PC-3 (cell line): ENCODE measurements at regions of chr1 and their contacts with region 1.

Region 1: GRCh38 chr1:93447516-93448291 is at the start of gene FNBP1L:
- DNase-seq: peak; percentile 83
- ATAC-seq: peak; percentile 77
- H3K4me3 ChIP-seq: peak within 1 kb of the TSS; percentile 85
- H3K27ac ChIP-seq: peak within 1 kb of the TSS; percentile 29
- H3K4me1 ChIP-seq: peaks cover 26% of the 10 kb centered on the region
- H3K27me3 ChIP-seq: no peaks in the 10 kb centered on the region
- CTCF ChIP-seq: no peak
- total RNA-seq, gene FNBP1L: 27.6 and 28.3 TPM in 2 replicates

Region 2: GRCh38 chr1:93148001-93148400 is 299.7 kb before region 1 on chr1:
- CTCF ChIA-PET with region 1: no interaction called
- POLR2A ChIA-PET with region 1: no interaction called
- intact Hi-C with region 1: no loop called
- DNase-seq: no peak
- ATAC-seq: no peak
- H3K4me3 ChIP-seq: no peak overlapping the region
- H3K27ac ChIP-seq: no peak overlapping the region
- H3K4me1 ChIP-seq: no peaks in the 10 kb centered on the region
- H3K27me3 ChIP-seq: no peaks in the 10 kb centered on the region
- CTCF ChIP-seq: no peak

Region 3: DNA sequence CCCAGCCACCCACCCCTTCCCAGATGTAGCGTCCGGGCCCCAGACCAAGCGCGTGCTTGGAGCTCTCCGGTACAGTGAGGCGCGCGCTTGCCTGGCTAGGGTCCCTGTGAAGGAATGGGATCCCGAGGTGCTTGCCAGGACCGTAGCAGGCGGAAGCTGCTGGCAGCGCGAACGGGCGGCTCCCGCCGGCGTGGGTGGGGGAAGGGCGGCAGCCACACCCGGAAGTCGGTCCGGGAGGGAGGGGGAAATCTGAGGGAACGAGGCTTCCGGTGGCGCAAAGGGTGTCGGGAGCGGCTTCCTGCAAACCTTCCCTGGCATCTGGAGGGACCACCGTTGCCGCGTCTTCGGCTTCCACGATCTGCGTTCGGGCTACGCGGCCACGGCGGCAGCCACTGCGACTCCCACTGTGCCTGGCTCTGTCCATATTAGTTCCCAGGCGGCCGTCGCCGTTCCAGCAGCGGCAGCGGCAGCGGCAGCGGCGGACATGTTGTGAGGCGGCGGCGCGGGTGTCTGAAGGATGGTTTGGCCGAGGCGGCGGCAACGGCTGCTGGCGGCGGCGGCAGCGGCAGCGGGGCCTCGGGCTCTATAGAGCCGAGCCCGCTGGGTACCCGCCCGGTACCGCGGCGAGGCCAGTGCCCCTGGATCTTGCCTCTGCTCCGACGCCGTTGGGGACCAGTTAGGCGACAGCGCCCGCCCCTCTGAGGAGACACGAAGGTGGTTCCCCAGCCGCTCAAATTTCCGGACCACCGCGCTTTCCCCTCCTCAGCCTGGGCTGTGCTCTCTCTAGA is 101.9 kb before region 1 on chr1 and contains the start of gene DR1:
- CTCF ChIA-PET with region 1: no interaction called
- POLR2A ChIA-PET with region 1: no interaction called
- intact Hi-C with region 1: loop called (anchors 5 kb)
- DNase-seq: peak; percentile 94
- ATAC-seq: peak; percentile 87
- H3K4me3 ChIP-seq: peak within 1 kb of the TSS; percentile 97
- H3K27ac ChIP-seq: peak within 1 kb of the TSS; percentile 91
- H3K4me1 ChIP-seq: peaks cover 12% of the 10 kb centered on the region; the same call in 1 of the 2 replicates
- H3K27me3 ChIP-seq: no peaks in the 10 kb centered on the region
- CTCF ChIP-seq: no peak
- total RNA-seq, gene DR1: 34.8 and 48.6 TPM in 2 replicates

Region 4: GRCh38 chr1:93502561-93502960 is 54.9 kb after region 1 on chr1:
- CTCF ChIA-PET with region 1: no interaction called
- POLR2A ChIA-PET with region 1: no interaction called
- intact Hi-C with region 1: loop called (anchors 10 kb)
- DNase-seq: peak; percentile 15
- ATAC-seq: no peak
- H3K4me3 ChIP-seq: no peak overlapping the region
- H3K27ac ChIP-seq: no peak overlapping the region
- H3K4me1 ChIP-seq: peaks cover 6% of the 10 kb centered on the region
- H3K27me3 ChIP-seq: no peaks in the 10 kb centered on the region
- CTCF ChIP-seq: no peak

Region 5: DNA sequence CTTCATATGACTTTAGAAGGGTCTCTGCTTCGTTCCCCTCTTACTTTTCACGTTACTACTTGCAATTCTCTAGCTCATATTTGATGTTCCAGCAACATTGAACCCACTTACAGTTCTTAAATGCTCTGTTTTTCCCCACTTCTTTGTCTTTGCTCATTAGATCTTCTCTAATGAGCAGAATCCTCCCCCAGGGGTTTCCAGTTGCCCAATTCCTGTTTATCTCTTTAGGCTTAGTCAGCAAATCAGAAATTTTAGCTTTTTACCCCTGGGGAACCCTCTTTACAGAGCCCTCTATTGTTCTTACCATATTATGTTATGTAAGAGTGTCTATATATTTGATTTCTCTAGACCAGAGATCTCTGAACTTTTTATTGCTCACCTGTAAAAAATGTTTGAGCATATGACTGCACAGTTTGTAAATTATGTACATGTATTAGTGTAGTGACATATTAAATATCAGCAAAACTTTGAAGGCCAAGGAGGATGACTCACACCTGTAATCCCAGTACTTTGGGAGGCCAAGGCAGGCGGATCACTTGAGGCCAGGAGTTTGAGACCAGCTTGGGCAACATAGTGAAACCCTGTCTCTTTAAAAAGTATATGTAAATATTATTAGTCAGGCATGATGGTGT is 71.6 kb after region 1 on chr1:
- CTCF ChIA-PET with region 1: no interaction called
- POLR2A ChIA-PET with region 1: no interaction called
- intact Hi-C with region 1: no loop called
- DNase-seq: peak; percentile 91
- ATAC-seq: peak; percentile 86
- H3K4me3 ChIP-seq: no peak overlapping the region
- H3K27ac ChIP-seq: peak overlapping the region; percentile 68
- H3K4me1 ChIP-seq: peaks cover 26% of the 10 kb centered on the region
- H3K27me3 ChIP-seq: no peaks in the 10 kb centered on the region
- CTCF ChIP-seq: no peak

Region 6: GRCh38 chr1:93559045-93559444 is 111.3 kb after region 1 on chr1:
- CTCF ChIA-PET with region 1: no interaction called
- POLR2A ChIA-PET with region 1: no interaction called
- intact Hi-C with region 1: loop called (anchors 2 kb)
- DNase-seq: no peak
- ATAC-seq: no peak
- H3K4me3 ChIP-seq: no peak overlapping the region
- H3K27ac ChIP-seq: no peak overlapping the region
- H3K4me1 ChIP-seq: peaks cover 13% of the 10 kb centered on the region
- H3K27me3 ChIP-seq: no peaks in the 10 kb centered on the region
- CTCF ChIP-seq: no peak

Region 7: DNA sequence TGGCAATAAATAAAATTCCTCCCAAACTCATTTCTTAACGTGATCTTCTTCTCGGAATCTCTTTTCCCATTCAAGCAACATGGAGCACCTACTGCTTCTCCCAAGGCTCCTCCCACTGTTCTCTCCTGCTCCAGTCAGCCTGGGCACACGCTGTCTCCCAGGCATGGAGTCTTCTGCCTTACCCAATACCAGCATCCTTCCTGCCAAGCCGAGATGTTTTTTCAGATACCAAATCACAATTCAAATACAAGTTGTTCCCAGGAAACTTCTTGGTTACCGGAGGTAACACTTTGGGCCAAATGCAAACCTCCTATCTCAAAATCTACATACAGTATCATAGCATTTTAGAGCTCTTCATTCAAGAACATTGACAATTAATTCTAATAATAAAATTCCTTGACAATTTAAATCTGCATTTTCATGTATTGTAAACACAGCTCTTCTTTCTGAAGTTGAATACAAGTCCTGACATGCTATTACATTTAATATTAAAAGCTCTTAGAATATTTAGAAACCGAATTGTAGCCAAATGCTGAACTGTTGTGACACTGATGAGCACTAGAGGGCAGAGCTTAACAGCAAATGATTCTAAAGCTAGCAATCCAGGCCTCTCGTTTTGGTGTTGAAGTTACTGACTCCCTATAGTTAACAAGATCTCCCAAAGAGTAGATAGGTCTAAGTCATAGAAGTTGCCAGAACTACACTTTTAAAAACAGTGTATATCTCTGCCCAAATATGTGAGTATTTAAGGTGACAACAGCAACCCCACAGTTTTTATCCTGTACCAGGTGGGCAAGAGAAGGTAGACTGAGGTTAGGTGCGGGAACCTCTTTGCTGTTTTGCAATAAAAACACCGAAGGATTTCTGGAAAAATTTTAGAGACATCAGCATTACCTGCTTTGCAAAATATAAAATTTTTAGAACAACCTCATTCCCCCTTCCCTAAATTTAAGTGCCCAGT is 181.7 kb after region 1 on chr1:
- CTCF ChIA-PET with region 1: no interaction called
- POLR2A ChIA-PET with region 1: no interaction called
- intact Hi-C with region 1: loop called (anchors 5 kb)
- DNase-seq: peak; percentile 85
- ATAC-seq: peak; percentile 64
- H3K4me3 ChIP-seq: no peak overlapping the region
- H3K27ac ChIP-seq: peak overlapping the region; percentile 72
- H3K4me1 ChIP-seq: peaks cover 75% of the 10 kb centered on the region
- H3K27me3 ChIP-seq: no peaks in the 10 kb centered on the region
- CTCF ChIP-seq: peak; percentile 88

Region 8: GRCh38 chr1:93878889-93879586 is 431.3 kb after region 1 on chr1 and contains the start of gene DNTTIP2:
- CTCF ChIA-PET with region 1: no interaction called
- POLR2A ChIA-PET with region 1: no interaction called
- intact Hi-C with region 1: loop called (anchors 10 kb)
- DNase-seq: peak; percentile 95
- ATAC-seq: peak; percentile 90
- H3K4me3 ChIP-seq: peak within 1 kb of the TSS; percentile 90
- H3K27ac ChIP-seq: peak within 1 kb of the TSS; percentile 91
- H3K4me1 ChIP-seq: peaks cover 20% of the 10 kb centered on the region
- H3K27me3 ChIP-seq: no peaks in the 10 kb centered on the region
- CTCF ChIP-seq: no peak
- total RNA-seq, gene DNTTIP2: 47.8 and 47.9 TPM in 2 replicates